AG04450 (cell line): ENCODE measurements at regions of chr12 and their contacts with region 1.

Region 1: GRCh38 chr12:48143898-48144297 is 13.4 kb downstream of the ASB8 start:
- DNase-seq: no peak
- H3K4me3 ChIP-seq: no peak overlapping the region
- H3K27ac ChIP-seq: no peak overlapping the region
- H3K27me3 ChIP-seq: no peaks in the 10 kb centered on the region
- CTCF ChIP-seq: no peak

Region 2: DNA sequence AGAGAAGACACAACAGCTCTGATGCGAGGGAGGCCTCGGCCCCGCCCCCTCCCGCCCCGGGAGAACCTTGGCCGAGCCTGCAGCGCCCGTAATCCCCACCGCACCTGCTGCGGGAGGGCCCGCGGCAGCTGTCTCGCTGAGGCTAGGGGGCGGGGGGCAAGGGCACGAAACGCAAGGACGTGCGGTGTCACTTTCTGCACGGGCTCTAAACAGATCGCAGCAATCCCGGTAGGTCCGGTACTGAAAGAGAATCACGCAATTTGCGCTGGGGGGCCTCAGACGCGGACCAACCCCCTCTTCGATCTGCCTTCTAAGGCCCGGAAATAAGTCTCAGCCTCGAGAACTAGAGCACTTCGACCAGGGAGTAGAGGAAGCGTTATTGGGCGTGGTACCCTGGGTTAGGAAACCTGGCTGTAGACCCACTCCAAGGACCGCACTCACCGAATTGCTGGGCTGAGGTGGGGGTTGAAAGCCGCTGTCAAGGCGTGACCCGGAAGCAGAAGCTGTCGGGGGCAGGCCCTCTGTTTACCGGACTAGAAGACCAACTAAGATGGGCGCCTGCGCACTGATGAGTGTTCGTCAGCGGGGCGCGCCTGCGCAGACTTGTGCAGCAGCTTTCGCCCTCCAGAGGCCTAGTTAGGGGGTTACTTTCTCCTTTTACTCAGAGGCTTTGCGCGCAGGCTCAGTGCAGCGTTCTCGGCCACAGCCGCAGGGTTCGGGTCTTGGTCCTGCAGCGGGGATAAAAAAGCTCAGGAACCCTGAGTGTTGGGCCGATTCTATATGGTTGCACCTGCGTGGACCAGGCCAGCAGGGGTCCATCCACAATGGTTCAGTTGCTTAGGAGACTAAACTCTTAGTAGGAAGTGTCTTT is 13.4 kb after region 1 on chr12 and contains the start of gene ASB8:
- CTCF ChIA-PET with region 1: interaction called, 11 read pairs
- POLR2A ChIA-PET with region 1: interaction called, 10 read pairs
- DNase-seq: peak; percentile 96
- H3K4me3 ChIP-seq: peak within 1 kb of the TSS; percentile 99
- H3K27ac ChIP-seq: peak within 1 kb of the TSS; percentile 31
- H3K27me3 ChIP-seq: no peaks in the 10 kb centered on the region
- CTCF ChIP-seq: peak; percentile 49
- polyA plus RNA-seq, gene ASB8: 30.1 and 34.2 TPM in 2 replicates